ENCODE measurements at regions of chr11 and their contacts with region 1.

Region 1: DNA sequence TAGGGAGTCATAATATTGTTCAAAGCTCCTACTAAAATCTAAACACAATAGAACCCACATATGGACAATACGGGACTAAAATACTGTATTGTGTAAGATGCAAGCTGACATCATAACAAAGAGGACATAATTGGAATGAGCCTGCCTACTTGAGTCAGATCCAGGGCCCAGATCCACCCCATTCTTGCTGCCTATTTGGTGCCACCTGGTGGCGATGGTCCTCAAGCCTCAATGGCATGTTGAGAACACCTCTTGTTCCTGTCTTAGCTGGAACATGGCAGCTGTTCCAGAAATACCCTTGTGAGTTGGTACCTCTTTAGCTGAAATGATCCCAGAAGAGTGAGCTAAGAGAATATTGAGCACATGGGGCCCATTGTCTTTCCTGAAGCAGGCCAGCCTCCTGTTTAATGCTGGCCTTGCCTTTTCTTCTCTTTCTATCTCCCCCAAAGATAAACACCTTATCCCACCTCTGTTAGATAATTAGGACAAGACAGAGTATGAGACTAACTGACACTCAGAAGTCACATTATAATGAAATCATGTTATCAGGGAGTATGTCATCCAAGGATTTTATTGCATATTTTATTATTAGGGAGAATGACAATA is 680.9 kb upstream of the ANO5 start:
- DNase-seq: peak; percentile 24
- CTCF ChIP-seq: peak; percentile 75

Region 2: DNA sequence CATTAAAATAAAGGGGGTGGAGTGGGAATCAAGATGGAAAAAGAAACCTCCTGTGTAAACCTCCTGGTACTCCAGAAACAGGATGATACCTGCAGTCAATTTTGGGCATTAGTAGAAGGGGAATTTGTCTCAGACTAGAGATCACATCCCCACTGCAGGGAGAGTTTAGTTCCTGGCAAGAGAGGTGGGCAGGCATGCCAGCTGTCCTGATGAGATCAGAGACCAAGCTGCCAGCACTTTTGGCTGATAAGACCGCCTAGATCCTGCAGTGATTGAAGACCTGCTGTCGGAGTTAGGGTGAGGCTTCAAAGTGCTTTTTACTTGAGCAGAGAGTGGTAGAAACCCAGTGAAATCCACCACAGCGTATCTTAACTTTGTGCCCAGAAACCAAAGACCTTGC is 872.2 kb before region 1 on chr11:
- CTCF ChIA-PET with region 1: interaction called, 65 read pairs
- POLR2A ChIA-PET with region 1: no interaction called
- DNase-seq: no peak
- CTCF ChIP-seq: no peak

Region 3: DNA sequence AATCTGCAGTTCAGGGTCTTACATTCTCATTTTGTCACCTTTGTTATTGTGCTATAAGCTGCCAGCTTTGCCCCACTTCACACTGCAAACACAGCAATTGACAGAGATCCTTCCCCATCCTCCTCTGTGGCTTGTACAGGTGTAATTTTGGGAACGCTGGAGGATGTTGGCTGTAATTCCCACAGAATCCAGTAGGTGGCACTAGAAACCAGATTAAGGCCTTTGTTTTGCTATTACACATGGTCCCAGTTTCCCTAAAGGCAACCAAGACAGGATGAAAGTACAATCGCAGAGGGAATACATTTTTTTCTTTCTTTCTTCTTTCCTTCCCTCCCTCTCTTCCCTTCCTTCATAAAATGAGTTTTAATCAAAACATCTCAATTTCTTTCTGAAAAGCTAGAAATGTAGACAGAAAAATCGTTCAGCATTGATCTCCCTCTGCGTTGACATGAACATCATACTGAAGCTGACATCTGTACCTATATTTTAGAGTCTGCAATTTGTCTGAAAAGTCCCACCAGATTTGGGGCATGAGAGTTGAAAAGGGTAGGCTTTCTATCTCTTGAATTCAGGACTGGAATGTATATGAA is 863.9 kb before region 1 on chr11:
- CTCF ChIA-PET with region 1: interaction called, 65 read pairs
- POLR2A ChIA-PET with region 1: no interaction called
- DNase-seq: peak; percentile 64
- CTCF ChIP-seq: peak; percentile 83

Region 4: DNA sequence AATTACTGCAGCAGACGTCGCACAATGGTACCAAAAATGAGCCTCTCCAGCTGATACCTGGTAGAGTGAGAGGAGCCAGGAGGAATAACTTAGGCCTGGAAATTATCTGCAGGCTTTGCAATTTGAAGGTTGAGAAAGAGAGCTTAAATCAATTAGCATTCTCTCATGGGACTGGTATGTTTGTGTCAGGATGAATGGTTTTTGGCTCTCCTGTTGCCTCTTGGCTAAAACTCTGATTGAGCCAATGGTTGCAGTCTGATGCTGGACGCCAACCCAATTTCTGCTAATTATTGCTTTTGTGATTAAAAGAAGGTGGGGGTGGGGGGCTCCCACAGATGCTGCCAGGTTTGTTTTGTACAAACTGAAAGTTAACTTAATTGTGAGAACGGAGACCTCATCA is 855.0 kb before region 1 on chr11:
- CTCF ChIA-PET with region 1: interaction called, 65 read pairs
- POLR2A ChIA-PET with region 1: no interaction called
- DNase-seq: no peak
- CTCF ChIP-seq: no peak

Region 5: GRCh38 chr11:21501245-21501644 is 10.7 kb before region 1 on chr11:
- CTCF ChIA-PET with region 1: interaction called, 41 read pairs
- POLR2A ChIA-PET with region 1: no interaction called
- DNase-seq: no peak
- CTCF ChIP-seq: no peak

Measured in GM10248 (cell line).